Caco-2 (cell line): ENCODE measurements at regions of chr13 and their contacts with region 1.

Region 1: DNA sequence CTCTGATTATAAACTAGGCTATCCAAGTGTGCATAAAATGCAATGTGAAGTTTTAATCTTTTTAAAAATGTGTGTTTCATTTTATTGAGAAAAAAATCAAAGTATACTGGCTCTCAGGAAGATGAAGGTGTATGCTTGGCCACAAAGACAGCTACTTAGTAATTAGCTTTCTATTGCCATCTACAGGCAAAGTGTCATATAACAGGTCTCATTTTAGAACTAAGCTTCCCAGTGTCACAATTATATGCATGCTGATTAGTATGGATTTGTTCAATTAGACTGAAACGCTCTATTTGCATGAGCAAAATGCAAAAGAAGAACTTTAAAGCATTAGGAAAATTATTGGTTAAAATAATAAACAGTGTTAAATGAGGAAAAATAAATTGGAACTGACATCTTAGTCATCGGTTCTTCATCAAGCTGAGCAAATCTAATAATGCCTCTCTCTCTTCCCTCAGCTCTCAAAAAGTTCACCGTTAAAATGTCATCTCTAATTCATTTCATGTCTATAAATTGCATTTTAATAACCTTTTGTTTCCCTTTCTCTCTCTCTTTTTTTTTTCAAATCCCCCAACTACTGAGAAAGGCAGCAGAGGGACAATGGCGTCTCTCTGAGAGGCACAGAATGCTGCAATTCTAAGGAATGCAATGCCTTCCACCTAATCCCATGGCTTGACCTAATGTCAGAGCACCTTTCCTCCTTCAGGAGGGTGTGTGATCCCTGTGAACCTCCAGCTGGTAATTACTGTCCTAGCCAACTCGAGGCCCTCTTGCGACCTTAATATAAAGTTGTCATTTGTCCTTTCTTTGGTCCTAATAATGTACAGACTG is 313.1 kb upstream of the MAB21L1 start:
- DNase-seq: peak in 1 of 2 experiments; percentile 9
- H3K4me3 ChIP-seq: no peak overlapping the region
- H3K4me3 Mint-ChIP-seq: no peak overlapping the region
- H3K27ac Mint-ChIP-seq: no peak overlapping the region
- H3K4me1 ChIP-seq: no peaks in the 10 kb centered on the region
- H3K4me1 Mint-ChIP-seq: no peaks in the 10 kb centered on the region
- H3K27me3 ChIP-seq: no peaks in the 10 kb centered on the region
- H3K27me3 Mint-ChIP-seq: peaks cover 12% of the 10 kb centered on the region
- CTCF ChIP-seq: peak; percentile 31 to 53

Region 2: GRCh38 chr13:35630551-35631275 is 158.8 kb before region 1 on chr13:
- CTCF ChIA-PET with region 1: interaction called, 3 read pairs
- POLR2A ChIA-PET with region 1: no interaction called
- intact Hi-C with region 1: loop called (anchors 1 kb)
- DNase-seq: peak; percentile 72 to 76
- H3K4me3 ChIP-seq: no peak overlapping the region
- H3K4me3 Mint-ChIP-seq: no peak overlapping the region
- H3K27ac Mint-ChIP-seq: no peak overlapping the region
- H3K4me1 ChIP-seq: peaks cover 4% of the 10 kb centered on the region; the same call in 1 of the 2 replicates
- H3K4me1 Mint-ChIP-seq: peaks cover 6% of the 10 kb centered on the region
- H3K27me3 ChIP-seq: no peaks in the 10 kb centered on the region
- H3K27me3 Mint-ChIP-seq: peaks cover 3% of the 10 kb centered on the region
- CTCF ChIP-seq: peak; percentile 76 to 80

Region 3: GRCh38 chr13:36242761-36243160 is 453.2 kb after region 1 on chr13:
- CTCF ChIA-PET with region 1: no interaction called
- POLR2A ChIA-PET with region 1: no interaction called
- intact Hi-C with region 1: no loop called
- DNase-seq: no peak
- H3K4me3 ChIP-seq: no peak overlapping the region
- H3K4me3 Mint-ChIP-seq: no peak overlapping the region
- H3K27ac Mint-ChIP-seq: no peak overlapping the region
- H3K4me1 ChIP-seq: no peaks in the 10 kb centered on the region
- H3K4me1 Mint-ChIP-seq: no peaks in the 10 kb centered on the region
- H3K27me3 ChIP-seq: no peaks in the 10 kb centered on the region
- H3K27me3 Mint-ChIP-seq: no peaks in the 10 kb centered on the region
- CTCF ChIP-seq: no peak